Left lung (tissue), 14 donors: ENCODE measurements at regions of chr17 and their contacts with region 1.

Region 1: GRCh38 chr17:34199932-34200534 is 55.1 kb upstream of the CCL2 start:
- DNase-seq: peak in 3 of 4 donors; percentile 63 to 90 (median 84)
- ATAC-seq: peak; percentile 99
- H3K4me3 ChIP-seq: no peak overlapping the region
- H3K27ac ChIP-seq: peak overlapping the region in 1 of 2 donors; percentile 50
- H3K4me1 ChIP-seq: peaks cover 4 to 19% of the 10 kb centered on the region in 2 donors
- H3K27me3 ChIP-seq: no peaks in the 10 kb centered on the region
- CTCF ChIP-seq: peak; percentile 98 to 100

Region 2: DNA sequence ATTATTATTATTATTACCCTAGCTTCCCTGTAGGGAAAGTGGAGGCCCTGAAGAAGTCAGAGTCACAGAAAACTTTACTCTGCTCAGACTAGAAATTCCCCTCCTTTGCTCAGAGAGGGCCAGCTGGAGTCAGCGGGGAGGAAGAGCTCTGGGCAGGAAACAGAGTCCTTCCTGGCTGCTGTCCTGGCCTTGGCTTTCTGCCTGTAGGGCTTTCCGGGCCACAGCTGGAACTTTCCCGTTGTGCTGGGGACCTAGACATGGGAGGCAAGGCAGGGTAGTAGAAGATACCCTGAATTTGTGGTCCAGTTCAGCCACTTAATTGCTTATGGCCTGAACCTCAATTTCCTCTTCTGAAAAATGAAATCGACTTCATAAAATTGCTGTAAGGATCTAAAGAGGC is 41.0 kb after region 1 on chr17:
- intact Hi-C with region 1: no loop called
- DNase-seq: peak in 2 of 4 donors; percentile 68 to 82
- ATAC-seq: peak; percentile 48
- H3K4me3 ChIP-seq: no peak overlapping the region
- H3K27ac ChIP-seq: peak overlapping the region; percentile 1 to 96
- H3K4me1 ChIP-seq: peaks cover 22 to 86% of the 10 kb centered on the region in 2 donors
- H3K27me3 ChIP-seq: no peaks in the 10 kb centered on the region
- CTCF ChIP-seq: no peak

Region 3: GRCh38 chr17:34306466-34306865 is 106.4 kb after region 1 on chr17:
- intact Hi-C with region 1: loop called in 1 of 2 experiments (anchors 5 kb)
- DNase-seq: no peak
- ATAC-seq: peak; percentile 88
- H3K4me3 ChIP-seq: no peak overlapping the region
- H3K27ac ChIP-seq: peak overlapping the region in 1 of 2 donors; percentile 42
- H3K4me1 ChIP-seq: peaks cover 0 to 29% of the 10 kb centered on the region in 2 donors
- H3K27me3 ChIP-seq: no peaks in the 10 kb centered on the region
- CTCF ChIP-seq: peak in 1 of 2 donors; percentile 42

Region 4: GRCh38 chr17:34361478-34362061 is 161.5 kb after region 1 on chr17:
- intact Hi-C with region 1: loop called (anchors 2 to 10 kb)
- DNase-seq: peak; percentile 78 to 93 (median 92)
- ATAC-seq: peak; percentile 99
- H3K4me3 ChIP-seq: no peak overlapping the region
- H3K27ac ChIP-seq: no peak overlapping the region
- H3K4me1 ChIP-seq: peaks cover 0 to 6% of the 10 kb centered on the region in 2 donors
- H3K27me3 ChIP-seq: no peaks in the 10 kb centered on the region
- CTCF ChIP-seq: peak; percentile 97 to 99